Natural killer cell (primary cell): ENCODE measurements at regions of chr13 and their contacts with region 1.

Region 1: GRCh38 chr13:52194184-52194868 is 34.9 kb upstream of the NEK3 start:
- DNase-seq: peak; percentile 83 to 92
- ATAC-seq: peak; percentile 87 to 95 (median 89)
- H3K4me3 ChIP-seq: peak overlapping the region; percentile 74
- H3K4me3 Mint-ChIP-seq: peak overlapping the region; percentile 98
- H3K27ac ChIP-seq: peak overlapping the region; percentile 65
- H3K27ac Mint-ChIP-seq: peak overlapping the region; percentile 89 to 91
- H3K4me1 ChIP-seq: peaks cover 7% of the 10 kb centered on the region
- H3K4me1 Mint-ChIP-seq: peaks cover 19 to 23% of the 10 kb centered on the region in 2 donors
- H3K27me3 ChIP-seq: no peaks in the 10 kb centered on the region
- H3K27me3 Mint-ChIP-seq: no peaks in the 10 kb centered on the region
- CTCF ChIP-seq: no peak

Region 2: DNA sequence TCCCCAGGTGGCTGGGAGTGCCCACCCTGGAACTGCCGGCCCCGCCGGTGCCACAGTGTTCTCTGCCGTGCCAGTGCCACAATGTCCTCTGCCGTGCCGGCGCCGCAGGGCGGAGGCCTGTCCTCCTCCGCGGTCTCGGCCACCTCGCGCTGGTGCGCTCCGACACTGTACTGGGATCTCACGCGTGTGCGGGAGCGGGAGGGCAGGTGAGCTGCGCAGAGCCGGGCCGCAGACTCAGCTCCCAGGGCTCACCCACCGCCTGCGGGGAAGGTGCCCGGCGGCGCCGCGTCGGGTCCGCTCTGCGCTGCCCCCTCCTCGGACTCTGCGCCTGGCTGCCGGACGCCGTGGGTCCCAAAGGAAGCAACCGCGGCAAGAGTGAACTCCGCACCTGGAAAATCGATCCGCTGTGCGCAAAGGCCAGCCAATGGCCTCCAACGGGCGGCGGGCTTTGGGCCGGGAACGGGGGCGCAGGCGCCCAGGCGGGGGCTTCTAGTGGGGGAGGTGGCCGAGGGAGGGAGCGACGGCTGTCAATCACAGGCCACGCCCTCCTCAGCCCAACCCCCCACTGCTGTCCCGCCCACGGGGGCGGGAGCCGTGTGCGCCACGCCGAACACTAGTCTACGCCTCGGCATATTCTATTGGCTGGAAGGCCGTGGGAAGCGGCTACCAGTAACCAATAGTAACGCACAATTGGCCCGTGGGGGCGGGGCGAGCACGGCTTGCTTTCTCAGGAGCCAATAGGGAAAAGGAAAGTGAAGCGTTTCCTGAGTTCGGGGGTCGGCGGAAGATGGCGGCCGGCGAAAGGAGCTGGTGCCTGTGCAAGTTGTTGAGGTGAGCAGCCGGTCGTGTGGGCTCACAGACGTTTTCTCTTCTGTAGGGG is 182.5 kb before region 1 on chr13 and contains the start of gene ALG11:
- intact Hi-C with region 1: loop called (anchors 2 kb)
- DNase-seq: peak; percentile 99
- ATAC-seq: peak; percentile 98 to 100 (median 98)
- H3K4me3 ChIP-seq: peak within 1 kb of the TSS; percentile 88
- H3K4me3 Mint-ChIP-seq: peak within 1 kb of the TSS; percentile 99
- H3K27ac ChIP-seq: peak within 1 kb of the TSS; percentile 64
- H3K27ac Mint-ChIP-seq: peak within 1 kb of the TSS; percentile 93 to 96
- H3K4me1 ChIP-seq: peaks cover 9% of the 10 kb centered on the region
- H3K4me1 Mint-ChIP-seq: peaks cover 21 to 32% of the 10 kb centered on the region in 2 donors
- H3K27me3 ChIP-seq: peaks cover 8% of the 10 kb centered on the region
- H3K27me3 Mint-ChIP-seq: peaks cover 24 to 27% of the 10 kb centered on the region in 2 donors
- CTCF ChIP-seq: no peak
- total RNA-seq, gene ALG11: 30.8 to 35.8 (median 35.2) TPM

Region 3: DNA sequence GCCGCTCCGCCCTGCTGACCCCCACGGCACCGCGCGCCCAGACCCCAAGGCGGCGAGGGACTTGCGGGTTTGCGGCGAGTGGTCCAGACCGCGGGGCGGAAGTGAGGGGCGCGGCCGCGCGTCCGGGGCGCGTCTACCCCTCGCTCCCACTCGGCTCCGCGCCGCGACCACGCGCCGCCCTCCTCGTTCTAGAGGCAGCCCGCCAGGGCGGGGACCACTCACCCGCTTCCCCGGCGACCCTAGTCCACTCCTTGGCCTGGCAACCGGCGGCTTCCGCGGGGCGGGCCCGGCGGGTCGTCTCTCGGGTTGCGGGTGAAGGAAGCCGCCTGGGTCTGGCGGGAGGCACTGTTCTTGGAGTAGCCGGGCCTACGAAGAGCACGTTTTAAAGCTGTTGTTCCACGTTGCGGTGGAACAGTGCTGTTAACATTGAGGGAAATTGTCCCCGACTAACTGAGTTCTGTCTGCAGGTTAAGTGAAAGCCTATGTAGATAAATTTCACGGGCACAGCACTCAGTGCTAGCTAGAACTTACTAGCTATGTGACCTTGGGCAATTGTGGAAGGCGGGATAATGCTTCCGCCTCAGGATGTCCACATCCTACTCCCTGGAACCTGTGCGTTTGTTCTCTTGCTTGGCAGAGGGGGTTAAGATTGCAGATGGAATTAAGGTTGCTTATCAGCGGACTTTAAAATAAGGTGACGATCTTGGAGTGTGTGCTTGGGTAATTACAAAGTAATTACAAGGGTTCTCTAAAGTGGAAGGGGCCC is 34.8 kb before region 1 on chr13 and contains the start of gene NEK3:
- intact Hi-C with region 1: loop called (anchors 5 kb)
- DNase-seq: peak; percentile 60 to 70
- ATAC-seq: peak; percentile 81 to 85 (median 84)
- H3K4me3 ChIP-seq: peak within 1 kb of the TSS; percentile 64
- H3K4me3 Mint-ChIP-seq: peak within 1 kb of the TSS; percentile 93
- H3K27ac ChIP-seq: peak within 1 kb of the TSS; percentile 47
- H3K27ac Mint-ChIP-seq: peak within 1 kb of the TSS; percentile 32 to 78
- H3K4me1 ChIP-seq: peaks cover 18% of the 10 kb centered on the region
- H3K4me1 Mint-ChIP-seq: peaks cover 37 to 39% of the 10 kb centered on the region in 2 donors
- H3K27me3 ChIP-seq: peaks cover 4% of the 10 kb centered on the region
- H3K27me3 Mint-ChIP-seq: no peaks in the 10 kb centered on the region
- CTCF ChIP-seq: no peak
- total RNA-seq, gene NEK3: 7.5 to 15.2 (median 8.8) TPM